Cardiac septum (tissue), 1 donor: ENCODE measurements at regions of chr21 and their contacts with region 1.

Region 1: DNA sequence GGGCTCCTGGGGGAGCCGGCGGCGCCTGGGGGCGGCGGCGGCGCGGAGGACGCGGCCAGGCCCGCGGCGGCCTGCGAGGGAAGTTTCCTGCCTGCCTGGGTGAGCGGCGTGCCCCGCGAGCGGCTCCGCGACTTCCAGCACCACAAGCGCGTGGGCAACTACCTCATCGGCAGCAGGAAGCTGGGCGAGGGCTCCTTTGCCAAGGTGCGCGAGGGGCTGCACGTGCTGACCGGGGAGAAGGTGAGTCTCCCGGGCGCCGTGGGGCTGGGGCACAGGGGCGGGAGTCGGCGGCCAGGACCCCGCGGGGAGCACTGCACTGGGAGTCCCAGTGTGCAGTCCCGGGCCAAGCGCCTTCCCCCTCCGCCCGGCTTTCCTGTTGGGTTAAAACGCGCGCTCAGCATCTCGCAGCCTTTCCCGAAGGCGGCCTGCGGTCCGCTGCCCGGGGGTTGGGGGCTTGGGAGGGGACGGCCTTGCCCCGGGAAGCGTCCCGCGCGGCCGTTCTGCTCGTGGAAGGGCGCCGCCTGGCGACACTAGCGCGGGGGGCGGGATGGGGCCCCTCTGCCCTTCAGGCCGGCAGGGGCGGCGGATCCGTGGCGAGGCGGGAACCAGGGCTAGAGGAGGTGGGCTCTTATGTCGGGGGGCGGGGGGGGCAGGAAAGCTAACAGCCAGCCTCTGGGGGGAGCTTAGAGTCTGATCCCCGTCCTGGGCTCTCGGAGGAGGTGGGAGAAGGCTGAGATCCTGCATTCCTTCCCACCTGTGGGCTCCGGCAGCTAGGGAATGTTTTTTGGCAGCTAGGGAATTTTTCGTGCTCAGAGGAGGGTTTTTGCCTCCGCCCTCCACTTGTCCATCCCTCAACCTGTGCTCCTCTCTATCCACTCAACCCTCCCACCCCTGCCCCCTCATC is 1.1 kb downstream of the HUNK start:
- DNase-seq: no peak

Region 2: GRCh38 chr21:32184485-32184884 is 310.5 kb after region 1 on chr21:
- intact Hi-C with region 1: loop called (anchors 5 kb)
- DNase-seq: no peak

Region 3: GRCh38 chr21:32457360-32457840 is 583.5 kb after region 1 on chr21:
- intact Hi-C with region 1: no loop called
- DNase-seq: no peak